ENCODE measurements at regions of chr18 and their contacts with region 1.

Region 1: DNA sequence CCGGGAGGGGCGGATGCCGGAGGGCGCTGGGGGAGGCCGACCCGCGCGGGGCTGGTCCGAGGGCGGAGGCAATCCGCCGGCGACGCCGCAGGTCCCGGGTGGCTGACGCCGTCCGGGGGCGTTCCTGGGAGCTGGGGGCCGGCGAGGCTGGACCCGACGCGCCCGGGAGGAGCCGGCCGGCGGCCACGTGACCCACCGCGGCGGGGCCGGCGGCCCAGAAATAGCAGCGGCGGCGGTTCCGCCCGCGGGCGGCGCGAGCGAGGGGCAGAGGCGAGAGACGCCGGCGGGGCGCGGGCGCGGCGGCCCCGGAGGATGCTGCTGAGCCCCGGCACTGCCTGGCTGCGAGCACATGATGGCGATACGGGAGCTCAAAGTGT is at the start of gene RAB31:
- DNase-seq: peak; percentile 86 to 90 (median 89)
- ATAC-seq: peak; percentile 66 to 96 (median 93)
- H3K4me3 ChIP-seq: peak within 1 kb of the TSS; percentile 60 to 98 (median 73)
- H3K27ac ChIP-seq: peak within 1 kb of the TSS; percentile 84 to 95 (median 88)
- H3K4me1 ChIP-seq: peaks cover 0 to 60% (median 10%) of the 10 kb centered on the region in 12 donors
- H3K27me3 ChIP-seq: no peaks in the 10 kb centered on the region
- CTCF ChIP-seq: peak in 3 of 12 donors; percentile 10 to 19 (median 12)
- POLR2A ChIP-seq: peak in 1 of 2 donors; percentile 68
- total RNA-seq, gene RAB31: 8.6 to 67.7 (median 15.4) TPM

Region 2: GRCh38 chr18:8937160-8938094 is 770.6 kb before region 1 on chr18:
- intact Hi-C with region 1: no loop called
- DNase-seq: no peak
- ATAC-seq: no peak
- H3K4me3 ChIP-seq: no peak overlapping the region
- H3K27ac ChIP-seq: no peak overlapping the region
- H3K4me1 ChIP-seq: no peaks in the 10 kb centered on the region
- H3K27me3 ChIP-seq: no peaks in the 10 kb centered on the region
- CTCF ChIP-seq: no peak
- POLR2A ChIP-seq: no peak

Region 3: GRCh38 chr18:9643549-9643948 is 64.5 kb before region 1 on chr18:
- intact Hi-C with region 1: no loop called
- DNase-seq: peak in 3 of 5 donors; percentile 15 to 35 (median 28)
- ATAC-seq: peak; percentile 85 to 98 (median 94)
- H3K4me3 ChIP-seq: no peak overlapping the region
- H3K27ac ChIP-seq: peak overlapping the region in 8 of 12 donors; percentile 26 to 66 (median 47)
- H3K4me1 ChIP-seq: peaks cover 0 to 14% (median 2%) of the 10 kb centered on the region in 12 donors
- H3K27me3 ChIP-seq: no peaks in the 10 kb centered on the region
- CTCF ChIP-seq: no peak
- POLR2A ChIP-seq: no peak

Region 4: GRCh38 chr18:9766076-9766481 is 58.0 kb after region 1 on chr18:
- intact Hi-C with region 1: loop called in 3 of 10 experiments (anchors 5 to 10 kb)
- DNase-seq: no peak
- ATAC-seq: peak in 2 of 4 donors; percentile 13 to 44
- H3K4me3 ChIP-seq: no peak overlapping the region
- H3K27ac ChIP-seq: peak overlapping the region in 1 of 12 donors; percentile 76
- H3K4me1 ChIP-seq: peaks cover 0 to 68% (median 3%) of the 10 kb centered on the region in 12 donors
- H3K27me3 ChIP-seq: no peaks in the 10 kb centered on the region
- CTCF ChIP-seq: no peak
- POLR2A ChIP-seq: no peak

Region 5: DNA sequence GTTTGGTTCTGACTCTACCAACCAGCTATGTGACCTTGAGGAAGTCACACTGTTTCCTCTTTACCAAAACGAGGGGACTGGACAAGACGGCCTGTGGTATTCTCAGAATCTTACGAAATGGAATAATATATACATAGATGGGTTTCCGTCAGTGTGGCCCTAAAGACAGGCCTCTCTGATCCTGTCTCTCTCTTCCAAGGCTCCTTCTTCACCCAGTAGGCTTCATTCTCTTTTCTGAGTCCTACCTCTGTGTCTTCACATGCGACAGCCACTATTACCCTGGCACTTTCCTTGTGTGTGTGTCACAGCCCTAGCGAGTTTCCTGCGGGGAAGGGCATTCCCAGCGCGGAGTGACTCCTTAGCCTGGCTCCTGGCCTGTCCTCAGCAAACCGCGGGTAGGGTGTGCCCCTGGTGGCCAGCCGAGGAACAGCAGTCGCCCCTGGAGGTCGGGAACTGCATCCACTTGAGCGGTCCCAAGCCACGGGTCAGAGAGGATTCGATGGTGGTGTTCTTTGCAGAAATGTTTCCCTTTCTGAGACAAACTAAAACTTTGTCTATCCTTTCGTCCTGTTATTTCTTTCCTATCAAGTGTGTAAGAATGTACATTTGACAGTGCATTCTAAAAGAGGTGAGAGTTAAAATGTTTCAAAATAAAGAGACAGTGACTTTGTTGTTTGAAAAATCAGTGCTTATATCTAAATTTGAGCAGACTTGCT is 63.4 kb after region 1 on chr18:
- intact Hi-C with region 1: loop called in 3 of 10 experiments (anchors 5 to 10 kb)
- DNase-seq: peak; percentile 84 to 92 (median 87)
- ATAC-seq: peak; percentile 87 to 98 (median 94)
- H3K4me3 ChIP-seq: peak overlapping the region in 2 of 12 donors; percentile 8 to 12
- H3K27ac ChIP-seq: peak overlapping the region in 7 of 12 donors; percentile 1 to 86 (median 14)
- H3K4me1 ChIP-seq: peaks cover 0 to 75% (median 9%) of the 10 kb centered on the region in 12 donors
- H3K27me3 ChIP-seq: no peaks in the 10 kb centered on the region
- CTCF ChIP-seq: peak; percentile 95 to 99 (median 98)
- POLR2A ChIP-seq: no peak

Region 6: GRCh38 chr18:10525371-10526210 is 817.5 kb after region 1 on chr18 and contains the start of gene NAPG:
- intact Hi-C with region 1: loop called in 1 of 10 experiments (anchors 10 kb)
- DNase-seq: peak; percentile 94 to 96 (median 96)
- ATAC-seq: peak; percentile 84 to 96 (median 94)
- H3K4me3 ChIP-seq: peak within 1 kb of the TSS; percentile 57 to 98 (median 79)
- H3K27ac ChIP-seq: peak within 1 kb of the TSS; percentile 88 to 99 (median 95)
- H3K4me1 ChIP-seq: peaks cover 0 to 47% (median 31%) of the 10 kb centered on the region in 12 donors
- H3K27me3 ChIP-seq: no peaks in the 10 kb centered on the region
- CTCF ChIP-seq: peak in 1 of 12 donors; percentile 16
- POLR2A ChIP-seq: peak in 1 of 2 donors; percentile 62
- total RNA-seq, gene NAPG: 26.7 to 46.3 (median 35.1) TPM

Measured in heart left ventricle (tissue), 16 donors.